Heart right ventricle (tissue), 16 donors: ENCODE measurements at regions of chrX and their contacts with region 1.

Region 1: GRCh38 chrX:23749576-23749975 is 6.5 kb upstream of the ACOT9 start:
- DNase-seq: no peak
- ATAC-seq: no peak
- H3K4me3 ChIP-seq: no peak overlapping the region
- H3K27ac ChIP-seq: no peak overlapping the region
- H3K4me1 ChIP-seq: no peaks in the 10 kb centered on the region
- H3K27me3 ChIP-seq: no peaks in the 10 kb centered on the region
- CTCF ChIP-seq: no peak

Region 2: GRCh38 chrX:23389196-23389792 is 360.3 kb before region 1 on chrX:
- intact Hi-C with region 1: no loop called
- DNase-seq: no peak
- ATAC-seq: no peak
- H3K4me3 ChIP-seq: no peak overlapping the region
- H3K27ac ChIP-seq: no peak overlapping the region
- H3K4me1 ChIP-seq: peaks cover 0 to 3% (median 0%) of the 10 kb centered on the region in 9 donors
- H3K27me3 ChIP-seq: peaks cover 0 to 12% (median 0%) of the 10 kb centered on the region in 7 donors
- CTCF ChIP-seq: no peak

Region 3: DNA sequence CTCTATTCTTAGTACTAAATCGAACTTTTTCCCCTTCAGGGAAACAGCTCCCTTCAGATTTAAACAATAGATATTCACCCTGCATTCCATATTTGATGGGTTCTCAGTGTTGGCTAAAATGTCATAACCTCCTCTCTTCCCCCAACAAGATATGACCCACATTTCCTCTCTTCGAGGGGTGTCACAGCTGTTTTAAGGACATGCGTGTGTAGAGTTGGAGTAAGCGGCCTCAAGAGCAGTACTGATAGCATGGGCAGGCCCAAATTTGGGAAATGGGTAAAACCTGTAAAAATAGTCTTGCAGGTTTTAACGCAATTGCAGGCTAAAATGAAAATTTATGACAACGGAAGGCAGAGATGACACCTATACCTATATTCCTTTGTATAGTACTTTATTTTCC is 62.1 kb after region 1 on chrX:
- intact Hi-C with region 1: loop called in 1 of 10 experiments (anchors 2 kb)
- DNase-seq: no peak
- ATAC-seq: peak in 1 of 8 donors; percentile 14
- H3K4me3 ChIP-seq: peak overlapping the region in 1 of 10 donors; percentile 22
- H3K27ac ChIP-seq: peak overlapping the region in 4 of 10 donors; percentile 25 to 59 (median 34)
- H3K4me1 ChIP-seq: peaks cover 0 to 8% (median 0%) of the 10 kb centered on the region in 9 donors
- H3K27me3 ChIP-seq: no peaks in the 10 kb centered on the region
- CTCF ChIP-seq: no peak